Dendritic cell treated with granulocyte-macrophage colony-stimulating factor and Interleukin-4, amounts not matched to agents 40 ng/mL and 50 ng/mL, for 4 days (primary cell): ENCODE measurements at regions of chr11 and their contacts with region 1.

Region 1: DNA sequence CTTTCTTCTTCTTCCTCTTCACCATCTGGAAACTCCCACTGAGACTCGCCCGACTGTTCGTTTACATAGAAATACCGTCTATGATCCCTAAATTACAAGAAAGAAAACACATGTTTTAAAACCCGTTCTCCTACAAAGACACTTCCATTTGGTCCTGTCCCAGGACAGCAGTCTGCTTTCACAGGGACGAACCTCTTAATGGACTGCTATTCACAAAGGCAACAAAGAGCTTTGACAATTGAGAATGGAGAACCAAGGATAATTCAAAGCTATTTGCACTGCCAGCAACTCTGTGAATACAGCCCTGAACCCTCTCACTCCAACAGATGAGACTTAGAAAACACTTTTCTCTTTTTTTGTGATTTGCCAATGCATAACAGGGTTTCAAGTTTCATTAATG is 16.3 kb upstream of the AGBL2 start:
- H3K4me3 Mint-ChIP-seq: no peak overlapping the region
- H3K27ac Mint-ChIP-seq: no peak overlapping the region
- H3K4me1 Mint-ChIP-seq: no peaks in the 10 kb centered on the region
- H3K27me3 Mint-ChIP-seq: no peaks in the 10 kb centered on the region

Region 2: DNA sequence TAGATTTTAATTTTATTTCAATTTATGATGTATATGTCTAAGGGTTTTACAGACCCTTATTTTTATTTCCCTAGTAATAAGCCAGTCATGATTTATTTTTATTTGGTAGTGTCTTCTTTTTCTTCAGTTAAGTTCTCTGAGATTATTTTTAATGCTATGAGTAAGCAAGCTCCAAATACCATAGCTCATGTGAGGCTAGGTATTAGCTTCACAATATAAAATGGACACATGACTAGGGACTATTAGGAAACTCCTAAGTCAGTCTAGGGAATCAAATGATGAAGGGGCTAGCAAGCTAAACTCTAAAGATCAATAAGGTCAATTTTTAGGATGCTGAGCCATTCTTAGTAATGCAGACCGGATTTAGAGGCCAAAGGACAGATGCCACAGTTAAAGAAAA is 931.3 kb before region 1 on chr11:
- intact Hi-C with region 1: loop called (anchors 10 kb)
- H3K4me3 Mint-ChIP-seq: no peak overlapping the region
- H3K27ac Mint-ChIP-seq: no peak overlapping the region
- H3K4me1 Mint-ChIP-seq: no peaks in the 10 kb centered on the region
- H3K27me3 Mint-ChIP-seq: no peaks in the 10 kb centered on the region

Region 3: DNA sequence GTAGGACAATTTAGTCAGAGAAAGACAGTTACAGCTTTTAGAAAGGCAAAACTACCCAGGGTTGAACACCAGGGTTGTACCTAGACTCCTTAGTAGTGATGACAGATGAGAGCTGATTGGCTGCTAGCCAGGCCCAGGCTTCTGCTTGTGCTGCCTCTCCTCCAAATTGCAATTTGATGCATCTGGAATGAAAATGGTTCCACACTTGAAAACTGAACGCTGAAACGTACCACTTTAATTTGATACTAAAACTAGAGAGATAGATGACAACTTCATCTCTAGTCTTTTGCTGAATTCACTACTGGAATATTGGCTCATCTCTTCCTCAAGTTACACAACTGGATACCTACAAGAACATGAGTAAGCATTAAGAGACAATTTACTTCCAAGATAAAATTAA is 54.9 kb after region 1 on chr11:
- intact Hi-C with region 1: loop called (anchors 10 kb)
- H3K4me3 Mint-ChIP-seq: no peak overlapping the region
- H3K27ac Mint-ChIP-seq: no peak overlapping the region
- H3K4me1 Mint-ChIP-seq: no peaks in the 10 kb centered on the region
- H3K27me3 Mint-ChIP-seq: no peaks in the 10 kb centered on the region